ENCODE measurements at regions of chr13 and their contacts with region 1.

Region 1: GRCh38 chr13:42384260-42384659 is 112.3 kb downstream of the AKAP11 start:
- DNase-seq: no peak
- ATAC-seq: no peak
- H3K4me3 Mint-ChIP-seq: no peak overlapping the region
- H3K27ac Mint-ChIP-seq: no peak overlapping the region
- H3K4me1 Mint-ChIP-seq: peaks cover 31% of the 10 kb centered on the region
- H3K27me3 Mint-ChIP-seq: no peaks in the 10 kb centered on the region
- CTCF ChIP-seq: no peak

Region 2: DNA sequence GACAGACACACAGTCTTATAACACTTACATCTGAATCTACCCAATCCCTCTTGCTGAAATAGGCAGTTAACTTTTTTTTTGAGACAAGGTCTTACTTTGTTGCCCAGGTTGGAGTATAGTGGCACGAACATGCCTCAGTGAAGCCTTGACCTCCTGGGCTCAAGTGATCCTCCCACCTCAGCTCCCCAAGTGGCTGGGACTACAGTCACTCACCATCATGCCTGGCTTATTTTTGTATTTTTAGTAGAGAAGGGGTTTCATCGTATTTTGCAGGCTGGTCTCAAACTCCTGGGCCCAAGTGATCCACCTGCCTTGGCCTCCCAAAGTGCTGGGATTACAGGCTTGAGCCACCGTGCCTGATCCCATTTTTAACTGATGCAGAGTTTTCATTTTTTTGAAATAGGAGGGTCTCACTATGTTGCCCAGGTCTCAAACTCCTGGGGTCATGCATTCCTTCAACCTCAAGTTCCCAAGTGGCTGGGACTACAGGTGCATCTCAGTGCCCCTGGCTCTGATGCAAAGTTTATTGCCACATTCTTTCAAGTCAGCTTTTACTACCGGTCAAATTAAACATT is 1372.8 kb before region 1 on chr13:
- CTCF ChIA-PET with region 1: no interaction called
- POLR2A ChIA-PET with region 1: interaction called, 11 read pairs
- intact Hi-C with region 1: no loop called
- DNase-seq: no peak
- ATAC-seq: no peak
- H3K4me3 Mint-ChIP-seq: peak overlapping the region; percentile 38
- H3K27ac Mint-ChIP-seq: peak overlapping the region; percentile 56
- H3K4me1 Mint-ChIP-seq: peaks cover 75% of the 10 kb centered on the region
- H3K27me3 Mint-ChIP-seq: no peaks in the 10 kb centered on the region
- CTCF ChIP-seq: no peak

Region 3: GRCh38 chr13:42623916-42624315 is 239.7 kb after region 1 on chr13:
- CTCF ChIA-PET with region 1: no interaction called
- POLR2A ChIA-PET with region 1: no interaction called
- intact Hi-C with region 1: no loop called
- DNase-seq: no peak
- ATAC-seq: no peak
- H3K4me3 Mint-ChIP-seq: no peak overlapping the region
- H3K27ac Mint-ChIP-seq: no peak overlapping the region
- H3K4me1 Mint-ChIP-seq: no peaks in the 10 kb centered on the region
- H3K27me3 Mint-ChIP-seq: no peaks in the 10 kb centered on the region
- CTCF ChIP-seq: no peak